Posterior cingulate gyrus (tissue), 11 donors: ENCODE measurements at regions of chr1 and their contacts with region 1.

Region 1: GRCh38 chr1:235866913-235867845 is 473 bp upstream of the LYST start:
- DNase-seq: peak; percentile 93 to 100 (median 97)

Region 2: DNA sequence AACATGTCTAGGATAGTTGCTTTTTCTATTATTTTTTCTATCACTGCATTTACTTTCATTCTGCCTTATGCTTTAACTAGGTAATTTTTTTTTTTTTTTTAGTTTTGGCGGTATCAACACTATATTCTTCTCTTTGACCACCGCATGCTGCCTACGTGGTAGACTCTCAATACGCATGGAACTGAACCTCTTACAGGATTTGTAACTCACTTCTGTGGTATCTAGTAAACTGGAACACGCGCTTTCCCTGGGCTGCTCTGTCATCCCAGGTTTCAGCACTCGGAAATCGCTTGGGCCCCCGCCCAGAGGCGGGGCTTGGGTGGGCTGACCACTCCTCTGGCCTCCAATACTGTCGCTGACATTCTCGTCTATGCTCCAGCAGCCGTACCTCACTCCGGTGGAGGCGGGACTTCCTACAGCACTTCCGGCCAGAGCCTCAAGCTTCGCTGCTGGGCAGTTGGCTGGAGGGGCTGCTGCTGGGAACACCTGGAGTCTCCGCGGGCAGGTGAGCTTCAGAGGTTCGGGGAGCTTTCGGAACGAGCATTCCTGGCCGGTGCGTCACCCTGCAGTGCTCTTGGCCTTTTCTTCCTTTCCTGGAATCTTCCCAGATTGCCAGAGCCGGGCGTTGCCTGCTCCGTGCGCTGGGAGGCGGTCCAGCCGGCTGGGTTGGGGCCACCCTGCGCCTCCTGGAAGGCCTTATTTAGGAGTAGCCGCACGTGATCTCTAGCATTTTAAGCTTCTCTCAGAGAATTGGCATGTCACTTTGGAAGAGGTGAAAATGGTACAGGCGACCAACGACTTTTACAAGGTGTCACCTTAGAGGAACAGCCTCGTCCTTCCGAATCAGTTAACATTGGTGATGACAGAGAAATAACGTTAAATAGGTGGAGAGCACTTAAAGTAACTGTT is 499.9 kb before region 1 on chr1 and contains the start of gene TBCE:
- intact Hi-C with region 1: loop called (anchors 5 kb)
- DNase-seq: peak; percentile 93 to 99 (median 97)

Region 3: GRCh38 chr1:235782601-235783000 is 84.6 kb before region 1 on chr1:
- intact Hi-C with region 1: no loop called
- DNase-seq: no peak

Region 4: GRCh38 chr1:235917267-235917811 is 50.2 kb after region 1 on chr1:
- intact Hi-C with region 1: no loop called
- DNase-seq: peak in 2 of 10 donors; percentile 26 to 86

Region 5: GRCh38 chr1:235971571-235972310 is 104.6 kb after region 1 on chr1:
- intact Hi-C with region 1: loop called (anchors 2 kb)
- DNase-seq: peak; percentile 68 to 96 (median 84)